Activated CD8-positive, alpha-beta memory T cell treated with anti-CD3 and anti-CD28 coated beads, Interleukin-2, amount 10 ng/mL, durations not matched to agents 7 days and 5 days (primary cell): ENCODE measurements at regions of chr10 and their contacts with region 1.

Region 1: GRCh38 chr10:96910488-96911395 is 78.6 kb downstream of the LCOR start:
- DNase-seq: no peak
- ATAC-seq: peak; percentile 42
- H3K4me3 Mint-ChIP-seq: no peak overlapping the region
- H3K27ac Mint-ChIP-seq: no peak overlapping the region
- H3K4me1 Mint-ChIP-seq: peaks cover 6% of the 10 kb centered on the region
- H3K27me3 Mint-ChIP-seq: no peaks in the 10 kb centered on the region

Region 2: GRCh38 chr10:96896884-96897589 is 13.7 kb before region 1 on chr10:
- CTCF ChIA-PET with region 1: interaction called, 11 read pairs
- DNase-seq: no peak
- ATAC-seq: peak; percentile 53
- H3K4me3 Mint-ChIP-seq: no peak overlapping the region
- H3K27ac Mint-ChIP-seq: peak overlapping the region; percentile 24
- H3K4me1 Mint-ChIP-seq: peaks cover 22% of the 10 kb centered on the region
- H3K27me3 Mint-ChIP-seq: no peaks in the 10 kb centered on the region